CD8-positive, alpha-beta memory T cell (primary cell): ENCODE measurements at regions of chr1 and their contacts with region 1.

Region 1: GRCh38 chr1:24586970-24587820 is 31.3 kb downstream of the NCMAP start:
- DNase-seq: peak; percentile 11 to 77 (median 63)
- H3K4me3 ChIP-seq: no peak overlapping the region
- H3K4me3 Mint-ChIP-seq: peak overlapping the region in 2 of 7 donors; percentile 28 to 34
- H3K27ac ChIP-seq: no peak overlapping the region
- H3K27ac Mint-ChIP-seq: peak overlapping the region; percentile 2 to 88 (median 66)
- H3K4me1 ChIP-seq: peaks cover 4% of the 10 kb centered on the region
- H3K4me1 Mint-ChIP-seq: peaks cover 5 to 8% (median 6%) of the 10 kb centered on the region in 3 donors
- H3K27me3 ChIP-seq: peaks cover 9% of the 10 kb centered on the region
- H3K27me3 Mint-ChIP-seq: peaks cover 5 to 8% of the 10 kb centered on the region in 2 donors

Region 2: DNA sequence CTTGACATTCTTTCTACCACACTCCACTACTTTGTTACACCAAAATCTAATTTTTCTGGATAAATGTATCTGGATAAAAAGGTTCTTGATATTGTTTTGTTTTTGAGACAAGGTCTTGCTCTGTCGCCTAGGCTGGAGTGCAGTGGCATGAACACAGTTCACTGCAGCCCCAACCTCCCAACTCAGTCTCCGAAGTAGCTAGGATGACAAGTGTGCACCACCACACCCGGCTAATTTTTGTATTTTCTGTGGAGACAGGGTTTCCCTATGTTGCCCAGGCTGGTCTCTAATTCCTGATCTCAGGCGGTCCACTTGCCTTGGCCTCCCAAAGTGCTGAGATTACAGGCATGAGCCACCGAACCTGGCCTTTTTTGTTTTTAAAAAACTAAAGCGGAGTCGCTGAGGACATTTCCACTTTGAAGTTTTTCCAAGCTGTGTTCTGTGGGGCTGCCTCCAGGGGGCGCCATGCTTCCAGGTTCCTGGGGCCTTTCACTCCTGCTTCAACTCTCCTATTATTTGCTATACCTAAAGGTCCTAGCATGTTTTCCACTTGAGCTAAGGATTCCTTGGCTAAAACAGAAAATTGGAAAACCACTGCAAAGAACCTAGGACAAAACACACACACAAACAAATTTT is 45.4 kb before region 1 on chr1:
- CTCF ChIA-PET with region 1: interaction called, 23 read pairs
- POLR2A ChIA-PET with region 1: no interaction called
- DNase-seq: no peak
- H3K4me3 ChIP-seq: no peak overlapping the region
- H3K4me3 Mint-ChIP-seq: peak overlapping the region in 1 of 7 donors; percentile 71
- H3K27ac ChIP-seq: no peak overlapping the region
- H3K27ac Mint-ChIP-seq: peak overlapping the region in 6 of 8 donors; percentile 9 to 76 (median 44)
- H3K4me1 ChIP-seq: peaks cover 25% of the 10 kb centered on the region
- H3K4me1 Mint-ChIP-seq: peaks cover 38 to 72% (median 51%) of the 10 kb centered on the region in 3 donors
- H3K27me3 ChIP-seq: no peaks in the 10 kb centered on the region
- H3K27me3 Mint-ChIP-seq: peaks cover 0 to 1% of the 10 kb centered on the region in 2 donors

Region 3: GRCh38 chr1:24575915-24576587 is 11.1 kb before region 1 on chr1:
- CTCF ChIA-PET with region 1: interaction called, 26 read pairs
- POLR2A ChIA-PET with region 1: no interaction called
- DNase-seq: no peak
- H3K4me3 ChIP-seq: no peak overlapping the region
- H3K4me3 Mint-ChIP-seq: no peak overlapping the region
- H3K27ac ChIP-seq: no peak overlapping the region
- H3K27ac Mint-ChIP-seq: peak overlapping the region in 1 of 8 donors; percentile 93
- H3K4me1 ChIP-seq: no peaks in the 10 kb centered on the region
- H3K4me1 Mint-ChIP-seq: peaks cover 6 to 10% (median 9%) of the 10 kb centered on the region in 3 donors
- H3K27me3 ChIP-seq: no peaks in the 10 kb centered on the region
- H3K27me3 Mint-ChIP-seq: peaks cover 0 to 3% of the 10 kb centered on the region in 2 donors